Endothelial cell of umbilical vein (primary cell): ENCODE measurements at regions of chr3 and their contacts with region 1.

Region 1: DNA sequence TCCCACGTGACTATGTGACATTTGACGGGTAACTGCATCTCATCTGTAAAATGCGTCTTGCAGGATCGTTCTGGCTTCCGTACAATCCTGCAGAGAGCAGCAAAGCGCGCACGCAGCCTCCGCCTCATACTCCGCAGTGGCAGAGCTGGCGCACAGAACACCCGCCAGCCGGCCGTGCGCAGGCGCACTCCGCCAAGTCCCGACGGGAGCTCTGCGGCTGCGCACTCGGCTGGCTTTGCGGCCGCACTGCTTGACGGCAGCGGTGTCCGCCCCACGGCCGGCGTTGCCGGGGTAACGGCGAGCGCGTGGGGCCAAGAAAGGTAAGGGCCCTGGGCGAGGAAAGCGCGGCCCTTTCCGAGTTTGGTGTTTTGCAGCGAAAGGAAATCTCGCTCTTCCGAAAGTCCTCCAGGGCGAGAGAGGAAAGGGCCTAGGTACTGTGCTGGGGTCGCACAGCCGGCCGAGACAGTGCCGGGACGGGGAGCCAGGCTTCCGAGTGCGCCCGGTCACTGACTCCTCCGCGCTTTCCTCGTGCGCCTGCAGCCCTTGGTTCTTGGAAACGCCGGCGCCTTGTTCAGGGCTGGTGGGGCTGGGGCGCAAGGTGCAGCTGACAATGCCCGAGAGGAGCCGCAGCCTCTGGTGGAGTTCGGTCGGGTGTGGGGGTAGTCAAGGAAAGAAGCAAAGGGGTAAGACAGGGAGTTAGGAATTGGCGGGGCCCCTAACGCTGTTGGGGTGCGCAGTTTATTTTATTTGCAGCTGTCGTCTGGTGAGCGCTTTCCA is at the start of gene TSEN2:
- DNase-seq: peak; percentile 96
- H3K4me3 ChIP-seq: peak within 1 kb of the TSS; percentile 51 to 59 (median 58)
- H3K27ac ChIP-seq: no peak within 1 kb of the TSS
- H3K4me1 ChIP-seq: peaks cover 23% of the 10 kb centered on the region
- H3K27me3 ChIP-seq: no peaks in the 10 kb centered on the region
- CTCF ChIP-seq: no peak
- POLR2A ChIP-seq: peak; percentile 86
- total RNA-seq, gene TSEN2: 12.1 and 12.6 TPM in 2 replicates

Region 2: DNA sequence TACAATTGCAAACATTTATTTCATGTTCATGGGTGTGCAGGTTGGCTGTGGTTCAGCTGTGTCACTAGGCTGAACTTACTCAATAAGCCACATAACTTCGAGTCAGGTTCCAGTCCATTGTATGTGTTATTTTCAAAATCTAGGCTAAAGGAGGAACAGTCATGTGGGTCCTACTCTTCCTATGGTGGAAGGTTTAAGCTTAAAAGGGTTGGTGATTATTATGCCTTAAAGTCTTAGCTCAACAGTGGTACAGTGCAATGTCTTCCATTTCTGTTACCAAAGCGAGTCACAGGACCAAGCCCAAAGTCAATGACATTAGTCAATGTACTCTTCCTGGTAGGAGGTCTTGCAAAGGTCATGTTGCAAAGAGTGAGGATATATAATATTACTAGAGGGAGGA is 1134.0 kb before region 1 on chr3:
- CTCF ChIA-PET with region 1: no interaction called
- POLR2A ChIA-PET with region 1: no interaction called
- dilution Hi-C with region 1: no loop called
- intact Hi-C with region 1: no loop called
- DNase-seq: no peak
- H3K4me3 ChIP-seq: no peak overlapping the region
- H3K27ac ChIP-seq: no peak overlapping the region
- H3K4me1 ChIP-seq: no peaks in the 10 kb centered on the region
- H3K27me3 ChIP-seq: no peaks in the 10 kb centered on the region
- CTCF ChIP-seq: no peak
- POLR2A ChIP-seq: no peak

Region 3: DNA sequence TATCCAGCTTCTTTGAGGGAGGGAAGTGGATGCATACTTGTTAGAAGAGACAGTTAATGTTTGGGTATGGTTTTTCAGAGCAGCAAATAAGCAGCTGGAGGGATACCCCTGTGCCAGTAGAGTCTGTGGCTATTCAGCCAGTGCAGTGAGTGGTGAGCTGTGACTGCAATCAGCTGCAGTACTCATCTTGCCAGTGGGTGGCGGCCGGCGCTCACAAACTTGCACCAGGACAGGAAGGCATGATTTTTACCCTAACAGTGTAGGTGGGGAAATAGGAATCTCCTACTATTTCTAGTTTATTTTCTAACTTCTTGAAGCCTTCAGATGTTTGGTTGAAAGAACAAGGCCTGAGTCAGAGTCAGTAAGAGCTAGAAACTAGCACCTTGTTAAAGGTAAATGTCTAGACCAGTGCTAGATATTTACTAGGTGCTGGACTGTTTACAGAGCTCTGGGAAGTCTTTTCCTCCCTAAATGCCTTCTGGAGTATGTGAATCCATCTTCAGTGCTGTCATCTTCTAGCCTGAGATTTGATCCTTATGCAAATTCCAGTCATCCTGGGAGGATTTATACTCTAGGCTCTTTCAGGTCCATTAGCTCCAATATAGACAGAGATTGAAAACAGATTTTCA is 349.2 kb before region 1 on chr3:
- CTCF ChIA-PET with region 1: interaction called, 256 read pairs
- POLR2A ChIA-PET with region 1: no interaction called
- dilution Hi-C with region 1: no loop called
- intact Hi-C with region 1: loop called (anchors 1 kb)
- DNase-seq: peak; percentile 61
- H3K4me3 ChIP-seq: no peak overlapping the region
- H3K27ac ChIP-seq: no peak overlapping the region
- H3K4me1 ChIP-seq: no peaks in the 10 kb centered on the region
- H3K27me3 ChIP-seq: peaks cover 21 to 32% of the 10 kb centered on the region in 2 experiments
- CTCF ChIP-seq: peak; percentile 84 to 90
- POLR2A ChIP-seq: no peak

Region 4: GRCh38 chr3:12287727-12288191 is 196.6 kb before region 1 on chr3:
- CTCF ChIA-PET with region 1: interaction called, 5 read pairs
- POLR2A ChIA-PET with region 1: no interaction called
- dilution Hi-C with region 1: no loop called
- intact Hi-C with region 1: loop called (anchors 5 kb)
- DNase-seq: no peak
- H3K4me3 ChIP-seq: peak overlapping the region in 1 of 3 experiments; percentile 32
- H3K27ac ChIP-seq: no peak overlapping the region
- H3K4me1 ChIP-seq: no peaks in the 10 kb centered on the region
- H3K27me3 ChIP-seq: peaks cover 23 to 29% of the 10 kb centered on the region in 2 experiments
- CTCF ChIP-seq: no peak
- POLR2A ChIP-seq: no peak

Region 5: DNA sequence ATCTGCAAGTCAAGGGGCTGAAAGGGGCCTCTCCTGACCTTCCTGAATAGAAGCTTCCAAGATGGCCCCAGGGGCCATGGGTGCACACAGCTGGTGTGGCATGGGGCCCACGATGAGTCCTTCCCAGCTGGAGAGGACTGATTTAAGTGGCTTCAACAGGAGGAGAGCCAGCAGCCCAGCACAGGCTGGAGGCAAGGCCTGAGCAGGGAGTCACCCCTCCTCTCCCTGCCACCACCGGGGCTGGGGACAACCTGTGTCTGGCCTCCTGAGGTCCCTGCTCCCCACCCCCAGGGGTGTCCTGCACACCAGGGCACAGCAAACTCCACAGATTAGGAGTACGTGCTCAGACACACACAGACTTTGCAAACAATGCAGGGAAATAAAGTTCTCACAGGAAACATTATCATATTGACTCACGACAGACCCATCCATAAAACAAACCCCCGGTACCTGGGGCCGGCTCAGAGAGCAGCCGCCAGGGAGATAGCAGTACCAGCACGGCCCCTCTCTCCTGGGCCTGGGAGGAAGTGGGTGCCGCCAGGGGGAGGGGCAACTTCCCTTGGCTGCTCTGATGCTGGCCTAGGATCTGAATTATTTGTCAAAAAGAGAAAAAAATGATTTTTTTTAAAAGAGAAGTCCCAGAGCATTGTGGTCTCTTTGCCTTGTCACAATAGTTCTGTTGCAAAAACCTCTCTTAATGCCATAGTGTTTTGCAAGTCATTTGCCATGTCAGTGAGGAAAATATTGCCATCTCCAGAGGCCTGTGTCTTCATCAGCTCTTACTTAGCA is 22.0 kb before region 1 on chr3:
- CTCF ChIA-PET with region 1: interaction called, 16 read pairs
- POLR2A ChIA-PET with region 1: no interaction called
- dilution Hi-C with region 1: no loop called
- intact Hi-C with region 1: no loop called
- DNase-seq: peak; percentile 18
- H3K4me3 ChIP-seq: no peak overlapping the region
- H3K27ac ChIP-seq: no peak overlapping the region
- H3K4me1 ChIP-seq: peaks cover 14% of the 10 kb centered on the region
- H3K27me3 ChIP-seq: no peaks in the 10 kb centered on the region
- CTCF ChIP-seq: no peak
- POLR2A ChIP-seq: no peak

Region 6: DNA sequence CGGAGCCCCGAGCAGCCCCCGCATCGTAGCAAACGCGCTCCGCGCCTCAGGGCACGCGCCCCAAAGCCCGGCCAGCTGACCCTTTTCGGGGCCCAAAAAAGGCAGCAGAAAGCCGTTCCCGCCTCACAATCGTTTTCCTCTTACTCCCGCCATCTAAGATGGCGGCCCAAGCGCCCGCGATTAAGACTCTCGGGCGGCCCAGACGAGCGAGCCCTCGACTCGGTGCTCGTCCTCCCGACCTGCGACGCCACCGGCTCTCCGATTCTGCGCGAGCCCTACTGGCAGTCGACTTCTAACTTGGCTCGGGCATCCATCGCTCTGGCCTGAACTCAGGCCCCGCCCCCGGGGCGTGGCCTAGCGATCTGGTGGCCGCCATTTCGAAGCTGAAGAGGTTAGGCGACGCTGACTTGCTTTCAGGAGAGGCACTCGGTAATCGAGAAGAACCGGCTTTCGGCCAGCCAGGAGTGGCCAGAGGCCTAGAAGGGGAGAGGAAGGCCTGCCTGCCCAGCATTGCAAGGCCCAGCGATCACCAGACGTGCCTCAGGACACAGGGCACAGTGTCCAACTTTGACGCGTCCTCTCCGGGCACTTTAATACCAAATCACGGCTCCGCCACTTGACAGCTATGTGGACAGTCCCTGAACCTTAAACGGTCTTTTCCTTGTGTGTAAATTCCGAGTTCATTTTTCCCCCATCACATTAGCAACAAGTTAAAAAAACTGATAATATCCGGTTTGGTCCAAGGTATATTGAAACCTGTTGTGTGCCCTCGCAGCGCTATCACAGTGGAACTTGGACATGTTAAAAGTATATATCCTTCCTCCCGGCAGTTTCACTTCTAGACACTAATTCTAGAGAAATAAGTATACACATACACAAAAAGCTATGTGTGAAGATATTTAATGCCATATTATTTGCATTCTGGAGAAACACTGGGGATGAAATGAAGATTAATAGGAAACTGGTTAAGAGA is 179.8 kb after region 1 on chr3 and contains the start of gene RAF1:
- CTCF ChIA-PET with region 1: no interaction called
- POLR2A ChIA-PET with region 1: no interaction called
- dilution Hi-C with region 1: no loop called
- intact Hi-C with region 1: loop called (anchors 1 kb)
- DNase-seq: peak; percentile 99
- H3K4me3 ChIP-seq: peak within 1 kb of the TSS; percentile 84 to 99 (median 96)
- H3K27ac ChIP-seq: peak within 1 kb of the TSS; percentile 87
- H3K4me1 ChIP-seq: peaks cover 13% of the 10 kb centered on the region
- H3K27me3 ChIP-seq: no peaks in the 10 kb centered on the region
- CTCF ChIP-seq: no peak
- POLR2A ChIP-seq: peak; percentile 97
- total RNA-seq, gene RAF1: 73.8 and 86.1 TPM in 2 replicates